Ascending aorta (tissue), 2 donors: ENCODE measurements at regions of chr18 and their contacts with region 1.

Region 1: DNA sequence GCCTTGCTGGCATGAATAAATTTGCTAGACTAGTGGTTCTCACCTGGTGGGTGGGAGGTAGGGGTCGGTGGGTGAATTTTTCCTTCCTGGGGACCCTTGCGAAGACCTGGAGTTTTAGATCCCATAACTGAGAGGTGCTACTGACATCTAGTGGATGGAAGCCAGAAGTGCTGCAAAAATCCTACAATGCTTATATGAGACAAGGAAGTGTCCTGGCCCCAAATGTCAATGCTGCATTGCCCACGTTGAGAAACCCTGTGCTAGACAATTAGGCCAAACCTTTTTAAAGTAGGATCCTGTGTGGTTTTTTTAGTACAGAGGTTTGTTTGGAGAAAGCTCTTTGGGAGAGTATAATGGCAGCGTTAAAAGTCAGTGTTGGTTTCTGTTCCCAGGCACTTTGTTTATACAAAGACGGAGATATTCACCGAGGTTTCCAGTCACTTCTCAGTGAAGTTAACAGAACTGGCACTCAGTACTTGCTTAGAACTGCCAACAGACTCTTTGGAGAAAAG is 9.6 kb downstream of the SERPINB8 start:
- DNase-seq: peak in 1 of 2 donors; percentile 72
- H3K4me3 ChIP-seq: peak overlapping the region; percentile 23 to 43
- H3K27ac ChIP-seq: peak overlapping the region; percentile 8 to 22
- H3K4me1 ChIP-seq: no peaks in the 10 kb centered on the region
- H3K27me3 ChIP-seq: no peaks in the 10 kb centered on the region
- CTCF ChIP-seq: peak; percentile 53 to 87 (median 74)

Region 2: DNA sequence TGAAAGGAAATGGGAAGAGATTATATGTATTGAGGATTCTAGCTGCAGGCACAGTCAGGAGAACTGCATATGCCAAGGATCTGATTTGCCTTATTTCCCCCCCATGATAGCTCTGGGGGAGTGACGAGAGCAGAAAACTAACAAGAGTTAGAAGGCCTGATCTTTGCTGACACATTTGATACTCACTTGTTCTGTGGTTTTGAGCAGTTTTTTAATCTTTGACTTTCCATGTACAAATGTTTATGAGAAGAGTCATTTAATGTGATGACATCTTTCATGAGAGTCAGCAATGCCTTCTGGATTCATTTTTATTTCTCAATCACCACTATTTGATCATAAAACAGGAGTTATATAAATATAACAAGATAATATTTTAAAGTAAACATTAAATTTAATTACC is 216.9 kb before region 1 on chr18:
- intact Hi-C with region 1: no loop called
- DNase-seq: no peak
- H3K4me3 ChIP-seq: no peak overlapping the region
- H3K27ac ChIP-seq: no peak overlapping the region
- H3K4me1 ChIP-seq: no peaks in the 10 kb centered on the region
- H3K27me3 ChIP-seq: no peaks in the 10 kb centered on the region
- CTCF ChIP-seq: no peak

Region 3: GRCh38 chr18:63963615-63964256 is 15.7 kb before region 1 on chr18:
- intact Hi-C with region 1: loop called (anchors 1 kb)
- DNase-seq: peak in 1 of 2 donors; percentile 69
- H3K4me3 ChIP-seq: no peak overlapping the region
- H3K27ac ChIP-seq: no peak overlapping the region
- H3K4me1 ChIP-seq: no peaks in the 10 kb centered on the region
- H3K27me3 ChIP-seq: no peaks in the 10 kb centered on the region
- CTCF ChIP-seq: peak; percentile 36 to 80 (median 79)